Posterior vena cava (tissue), 2 donors: ENCODE measurements at regions of chr3 and their contacts with region 1.

Region 1: GRCh38 chr3:80870476-80871041 is 890.9 kb downstream of the GBE1 start:
- DNase-seq: no peak

Region 2: DNA sequence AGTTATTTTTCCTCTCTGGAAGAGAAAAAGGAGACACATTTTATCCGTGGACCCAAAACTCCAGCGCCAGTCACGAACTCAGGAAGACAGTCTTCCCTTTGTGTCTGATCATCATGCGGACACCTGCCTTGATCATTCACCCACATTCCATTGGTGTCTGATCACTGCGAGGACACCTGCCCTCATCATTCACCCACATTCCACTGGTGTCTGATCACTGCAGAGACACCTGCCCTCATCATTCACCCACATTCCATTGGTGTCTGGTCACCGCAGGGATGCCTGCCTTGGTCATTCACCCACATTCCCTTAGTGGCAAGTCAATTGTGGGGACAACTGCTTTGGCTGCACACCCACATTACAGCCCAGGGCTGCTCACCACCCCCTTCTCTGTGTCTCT is 1251.7 kb before region 1 on chr3:
- intact Hi-C with region 1: loop called in 1 of 2 experiments (anchors 5 kb)
- DNase-seq: no peak